ENCODE measurements at regions of chr10 and their contacts with region 1.

Region 1: GRCh38 chr10:116683821-116684220 is 58.5 kb downstream of the HSPA12A start:
- DNase-seq: no peak
- ATAC-seq: no peak
- H3K4me3 ChIP-seq: no peak overlapping the region
- H3K27ac ChIP-seq: no peak overlapping the region
- H3K4me1 ChIP-seq: peaks cover under 1 to 30% (median 19%) of the 10 kb centered on the region in 9 donors
- H3K27me3 ChIP-seq: no peaks in the 10 kb centered on the region
- CTCF ChIP-seq: no peak

Region 2: GRCh38 chr10:116742367-116743265 is 58.8 kb after region 1 on chr10 and contains the start of gene HSPA12A:
- intact Hi-C with region 1: loop called in 3 of 10 experiments (anchors 2 to 10 kb)
- DNase-seq: peak; percentile 73 to 82
- ATAC-seq: peak; percentile 87 to 95 (median 94)
- H3K4me3 ChIP-seq: peak within 1 kb of the TSS; percentile 67 to 95 (median 84)
- H3K27ac ChIP-seq: peak within 1 kb of the TSS; percentile 74 to 97 (median 95)
- H3K4me1 ChIP-seq: peaks cover 3 to 19% (median 17%) of the 10 kb centered on the region in 9 donors
- H3K27me3 ChIP-seq: peaks cover 0 to 76% (median 18%) of the 10 kb centered on the region in 7 donors
- CTCF ChIP-seq: no peak
- total RNA-seq, gene HSPA12A: 9.1 to 18.1 (median 10.7) TPM

Region 3: GRCh38 chr10:116787893-116788665 is 104.3 kb after region 1 on chr10:
- intact Hi-C with region 1: loop called (anchors 1 to 5 kb)
- DNase-seq: peak; percentile 81
- ATAC-seq: peak; percentile 79 to 93 (median 86)
- H3K4me3 ChIP-seq: peak overlapping the region in 7 of 10 donors; percentile 5 to 44 (median 28)
- H3K27ac ChIP-seq: no peak overlapping the region
- H3K4me1 ChIP-seq: peaks cover 0 to 12% (median 4%) of the 10 kb centered on the region in 9 donors
- H3K27me3 ChIP-seq: peaks cover 0 to 21% (median 13%) of the 10 kb centered on the region in 7 donors
- CTCF ChIP-seq: peak; percentile 97 to 100 (median 100)

Measured in heart right ventricle (tissue), 16 donors.